Activated CD4-positive, alpha-beta memory T cell treated with anti-CD3 and anti-CD28 coated beads for 36 hours (primary cell): ENCODE measurements at regions of chr4 and their contacts with region 1.

Region 1: GRCh38 chr4:118835571-118836300 is at the start of gene SEC24D:
- DNase-seq: peak; percentile 89
- H3K4me3 Mint-ChIP-seq: peak within 1 kb of the TSS; percentile 88
- H3K27ac Mint-ChIP-seq: peak within 1 kb of the TSS; percentile 91
- H3K4me1 Mint-ChIP-seq: peaks cover 23% of the 10 kb centered on the region
- H3K27me3 Mint-ChIP-seq: no peaks in the 10 kb centered on the region
- total RNA-seq, gene SEC24D: 36.2 to 41.0 TPM

Region 2: DNA sequence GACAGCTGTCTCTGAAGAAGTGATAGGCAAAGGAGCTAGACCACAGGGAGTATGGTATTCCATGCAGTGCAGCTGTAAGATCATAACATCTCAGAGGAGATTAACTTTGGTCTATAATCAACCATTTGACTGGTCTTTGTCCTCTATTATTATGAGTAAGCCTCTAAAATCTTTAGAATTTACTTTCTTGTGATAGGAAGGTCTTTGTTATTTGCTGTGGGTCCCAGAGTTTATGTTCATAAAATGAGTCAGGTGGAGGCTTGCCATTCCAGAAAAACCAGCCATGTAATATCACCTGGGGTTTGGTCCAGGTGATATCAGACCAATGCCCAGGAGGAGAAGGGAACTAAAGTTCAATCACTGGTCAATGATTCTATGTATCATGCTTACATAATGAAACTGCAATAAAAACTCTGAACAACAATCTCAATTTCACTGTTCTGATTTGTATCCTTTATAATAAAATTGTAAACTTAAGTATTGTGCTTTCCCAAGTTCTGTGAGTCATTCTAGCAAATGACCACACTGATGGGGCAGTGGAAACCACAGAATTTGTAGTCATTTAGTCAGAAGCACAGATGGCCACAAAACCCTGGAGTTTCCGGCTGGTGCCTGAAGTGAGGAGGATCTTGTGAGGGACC is 1510.8 kb before region 1 on chr4:
- CTCF ChIA-PET with region 1: no interaction called
- POLR2A ChIA-PET with region 1: no interaction called
- intact Hi-C with region 1: no loop called
- DNase-seq: no peak
- H3K4me3 Mint-ChIP-seq: no peak overlapping the region
- H3K27ac Mint-ChIP-seq: no peak overlapping the region
- H3K4me1 Mint-ChIP-seq: no peaks in the 10 kb centered on the region
- H3K27me3 Mint-ChIP-seq: no peaks in the 10 kb centered on the region

Region 3: GRCh38 chr4:118684873-118685811 is 150.6 kb before region 1 on chr4 and contains the start of gene METTL14:
- CTCF ChIA-PET with region 1: no interaction called
- POLR2A ChIA-PET with region 1: no interaction called
- intact Hi-C with region 1: loop called (anchors 1 kb)
- DNase-seq: peak; percentile 93
- H3K4me3 Mint-ChIP-seq: peak within 1 kb of the TSS; percentile 97
- H3K27ac Mint-ChIP-seq: peak within 1 kb of the TSS; percentile 94
- H3K4me1 Mint-ChIP-seq: peaks cover 24% of the 10 kb centered on the region
- H3K27me3 Mint-ChIP-seq: no peaks in the 10 kb centered on the region
- total RNA-seq, gene METTL14: 39.8 to 48.3 TPM

Region 4: GRCh38 chr4:118850488-118851173 is 14.9 kb after region 1 on chr4:
- CTCF ChIA-PET with region 1: interaction called, 7 read pairs
- POLR2A ChIA-PET with region 1: interaction called, 8 read pairs
- intact Hi-C with region 1: loop called (anchors 1 kb)
- DNase-seq: peak; percentile 35
- H3K4me3 Mint-ChIP-seq: peak overlapping the region; percentile 90
- H3K27ac Mint-ChIP-seq: peak overlapping the region; percentile 84
- H3K4me1 Mint-ChIP-seq: peaks cover 18% of the 10 kb centered on the region
- H3K27me3 Mint-ChIP-seq: peaks cover 2% of the 10 kb centered on the region

Region 5: GRCh38 chr4:119238068-119238722 is 402.5 kb after region 1 on chr4:
- CTCF ChIA-PET with region 1: no interaction called
- POLR2A ChIA-PET with region 1: no interaction called
- intact Hi-C with region 1: loop called (anchors 10 kb)
- DNase-seq: peak; percentile 54
- H3K4me3 Mint-ChIP-seq: no peak overlapping the region
- H3K27ac Mint-ChIP-seq: peak overlapping the region; percentile 69
- H3K4me1 Mint-ChIP-seq: peaks cover 33% of the 10 kb centered on the region
- H3K27me3 Mint-ChIP-seq: no peaks in the 10 kb centered on the region